Endothelial cell of umbilical vein (primary cell): ENCODE measurements at regions of chr16 and their contacts with region 1.

Region 1: GRCh38 chr16:74275002-74275636 is 21.5 kb upstream of the PSMD7 start:
- DNase-seq: peak; percentile 39
- H3K4me3 ChIP-seq: no peak overlapping the region
- H3K27ac ChIP-seq: no peak overlapping the region
- H3K4me1 ChIP-seq: no peaks in the 10 kb centered on the region
- H3K27me3 ChIP-seq: peaks cover 3 to 8% of the 10 kb centered on the region in 2 experiments
- CTCF ChIP-seq: peak in 1 of 2 donors; percentile 21
- POLR2A ChIP-seq: no peak

Region 2: GRCh38 chr16:73956587-73957494 is 318.3 kb before region 1 on chr16:
- CTCF ChIA-PET with region 1: interaction called, 5 read pairs
- POLR2A ChIA-PET with region 1: no interaction called
- dilution Hi-C with region 1: no loop called
- intact Hi-C with region 1: loop called (anchors 1 kb)
- DNase-seq: peak; percentile 53
- H3K4me3 ChIP-seq: no peak overlapping the region
- H3K27ac ChIP-seq: no peak overlapping the region
- H3K4me1 ChIP-seq: no peaks in the 10 kb centered on the region
- H3K27me3 ChIP-seq: no peaks in the 10 kb centered on the region
- CTCF ChIP-seq: peak; percentile 69 to 72
- POLR2A ChIP-seq: no peak

Region 3: DNA sequence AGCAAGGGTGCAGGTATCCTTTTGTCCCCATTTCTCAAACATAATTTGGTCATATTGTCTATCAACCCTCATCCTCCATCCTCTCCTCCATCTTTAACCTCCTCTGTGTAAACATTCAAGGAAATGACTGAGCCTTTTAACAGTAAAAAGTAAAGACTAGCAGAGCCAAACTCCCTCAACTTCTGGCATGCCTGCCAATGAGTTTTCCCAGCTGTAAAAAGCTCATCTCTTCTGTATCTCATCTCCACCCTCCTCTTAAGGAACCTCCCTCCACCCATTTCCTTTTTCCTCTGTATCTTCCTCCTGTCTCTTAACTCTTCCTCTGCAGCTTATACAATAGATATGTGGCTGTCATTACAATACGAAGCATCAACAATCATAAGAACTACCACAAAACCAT is 55.4 kb before region 1 on chr16:
- CTCF ChIA-PET with region 1: no interaction called
- POLR2A ChIA-PET with region 1: no interaction called
- dilution Hi-C with region 1: no loop called
- intact Hi-C with region 1: no loop called
- DNase-seq: no peak
- H3K4me3 ChIP-seq: no peak overlapping the region
- H3K27ac ChIP-seq: no peak overlapping the region
- H3K4me1 ChIP-seq: no peaks in the 10 kb centered on the region
- H3K27me3 ChIP-seq: no peaks in the 10 kb centered on the region
- CTCF ChIP-seq: no peak
- POLR2A ChIP-seq: no peak

Region 4: GRCh38 chr16:74296432-74297144 is 21.5 kb after region 1 on chr16 and contains the start of gene PSMD7:
- CTCF ChIA-PET with region 1: interaction called, 11 read pairs
- POLR2A ChIA-PET with region 1: no interaction called
- dilution Hi-C with region 1: no loop called
- intact Hi-C with region 1: no loop called
- DNase-seq: peak; percentile 93
- H3K4me3 ChIP-seq: peak within 1 kb of the TSS; percentile 84 to 97 (median 95)
- H3K27ac ChIP-seq: peak within 1 kb of the TSS; percentile 81
- H3K4me1 ChIP-seq: peaks cover 16% of the 10 kb centered on the region
- H3K27me3 ChIP-seq: no peaks in the 10 kb centered on the region
- CTCF ChIP-seq: no peak
- POLR2A ChIP-seq: peak; percentile 87
- total RNA-seq, gene PSMD7: 119 and 123 TPM in 2 replicates

Region 5: GRCh38 chr16:74320707-74321106 is 45.6 kb after region 1 on chr16:
- CTCF ChIA-PET with region 1: no interaction called
- POLR2A ChIA-PET with region 1: no interaction called
- dilution Hi-C with region 1: no loop called
- intact Hi-C with region 1: no loop called
- DNase-seq: no peak
- H3K4me3 ChIP-seq: no peak overlapping the region
- H3K27ac ChIP-seq: no peak overlapping the region
- H3K4me1 ChIP-seq: no peaks in the 10 kb centered on the region
- H3K27me3 ChIP-seq: no peaks in the 10 kb centered on the region
- CTCF ChIP-seq: no peak
- POLR2A ChIP-seq: no peak

Region 6: GRCh38 chr16:74524926-74525325 is 249.8 kb after region 1 on chr16:
- CTCF ChIA-PET with region 1: no interaction called
- POLR2A ChIA-PET with region 1: no interaction called
- dilution Hi-C with region 1: no loop called
- intact Hi-C with region 1: no loop called
- DNase-seq: no peak
- H3K4me3 ChIP-seq: no peak overlapping the region
- H3K27ac ChIP-seq: no peak overlapping the region
- H3K4me1 ChIP-seq: no peaks in the 10 kb centered on the region
- H3K27me3 ChIP-seq: no peaks in the 10 kb centered on the region
- CTCF ChIP-seq: no peak
- POLR2A ChIP-seq: no peak